ENCODE measurements at regions of chr6 and their contacts with region 1.

Region 1: GRCh38 chr6:31139599-31139998 is 733 bp upstream of the PSORS1C2 start:
- DNase-seq: no peak
- H3K4me3 ChIP-seq: no peak overlapping the region
- H3K27ac ChIP-seq: no peak overlapping the region
- H3K4me1 ChIP-seq: peaks cover 0 to 4% of the 10 kb centered on the region in 2 donors
- H3K27me3 ChIP-seq: no peaks in the 10 kb centered on the region
- CTCF ChIP-seq: no peak

Region 2: DNA sequence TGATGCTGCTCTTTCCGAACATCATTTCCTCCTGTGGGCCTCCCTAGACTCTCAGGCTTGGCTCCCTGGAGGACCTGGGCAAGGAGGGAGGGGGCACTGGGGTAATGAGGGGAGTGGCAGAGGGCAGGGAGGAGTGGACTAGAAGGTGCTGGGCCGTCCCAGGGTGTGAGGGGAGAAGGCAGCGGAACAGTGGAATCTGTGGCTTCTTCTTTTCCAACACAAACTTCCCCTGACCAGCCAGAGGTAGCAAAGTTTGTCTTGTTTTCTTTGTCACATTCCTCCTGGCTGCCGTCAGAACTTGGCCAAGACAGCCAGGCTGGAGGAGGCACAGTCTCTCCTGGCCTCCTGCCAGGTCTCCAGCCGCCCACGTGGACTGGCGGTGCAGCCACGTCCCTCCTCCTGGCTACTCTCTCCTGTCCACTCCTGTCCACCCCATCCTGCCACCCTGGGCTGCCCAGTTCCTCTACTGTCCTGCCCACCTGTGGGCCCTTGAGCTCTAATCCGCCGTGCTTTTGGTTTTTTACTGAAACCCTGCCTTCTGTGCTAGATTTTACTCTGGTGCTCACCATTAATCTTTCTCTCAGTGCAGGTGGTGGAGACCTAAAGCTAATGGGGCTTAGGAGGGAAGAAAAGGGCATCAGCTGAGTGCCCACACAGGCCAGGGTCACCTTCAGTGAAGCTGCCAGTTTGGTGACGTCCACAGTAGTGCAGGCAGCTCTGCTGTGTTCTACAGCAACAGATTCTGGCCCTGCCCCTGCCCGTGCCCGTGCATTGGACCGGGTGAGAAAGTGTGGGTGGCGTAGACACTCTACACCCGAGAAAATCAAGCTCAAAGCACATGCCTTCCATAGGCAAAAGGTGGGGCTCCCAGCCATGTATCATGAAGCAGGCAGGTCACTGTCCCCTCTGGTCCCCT is 16.6 kb before region 1 on chr6:
- intact Hi-C with region 1: no loop called
- DNase-seq: peak in 1 of 2 donors; percentile 78
- H3K4me3 ChIP-seq: no peak overlapping the region
- H3K27ac ChIP-seq: peak overlapping the region; percentile 48 to 56
- H3K4me1 ChIP-seq: peaks cover 0 to 12% of the 10 kb centered on the region in 2 donors
- H3K27me3 ChIP-seq: no peaks in the 10 kb centered on the region
- CTCF ChIP-seq: no peak

Region 3: DNA sequence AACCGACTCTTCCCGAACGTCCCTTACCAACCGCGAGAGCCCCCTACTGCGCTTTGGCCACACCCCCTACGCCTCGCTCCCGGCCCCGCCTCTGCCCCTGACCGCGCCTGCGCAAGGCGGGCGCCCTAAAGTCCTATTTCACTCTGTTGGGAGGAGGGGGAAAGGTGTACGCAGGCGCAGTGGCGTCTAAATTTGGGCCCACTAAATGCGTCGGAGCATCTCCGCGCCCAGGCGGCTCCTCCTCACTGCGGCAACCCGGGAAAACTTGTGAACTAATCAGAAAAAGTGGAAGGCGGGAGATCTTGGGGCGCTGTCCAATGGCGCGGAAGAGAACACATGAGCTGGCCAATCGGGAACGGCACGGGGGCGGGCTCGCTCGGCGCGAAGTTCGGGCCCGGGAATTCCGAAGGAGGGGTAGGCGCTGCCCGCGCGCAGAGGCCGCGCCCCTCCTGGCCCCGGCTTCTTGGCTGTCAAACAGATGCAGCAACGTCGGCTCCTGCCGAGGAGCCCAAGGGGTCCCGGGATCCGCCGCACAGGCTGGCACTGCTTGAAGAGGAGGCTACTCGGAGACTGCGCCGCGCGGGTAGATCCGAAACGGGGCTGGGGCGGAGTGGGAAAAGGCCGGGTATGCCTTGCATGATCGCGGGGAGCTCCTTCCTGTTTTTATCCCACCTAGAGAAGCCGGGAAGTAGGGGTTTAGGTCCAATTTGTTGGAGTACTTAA is 18.7 kb after region 1 on chr6 and contains the start of gene TCF19:
- intact Hi-C with region 1: loop called (anchors 1 kb)
- DNase-seq: peak; percentile 96 to 100
- H3K4me3 ChIP-seq: peak within 1 kb of the TSS; percentile 70 to 86
- H3K27ac ChIP-seq: peak within 1 kb of the TSS; percentile 53 to 70
- H3K4me1 ChIP-seq: peaks cover 0 to 17% of the 10 kb centered on the region in 2 donors
- H3K27me3 ChIP-seq: no peaks in the 10 kb centered on the region
- CTCF ChIP-seq: no peak
- total RNA-seq, gene TCF19: 10.3 TPM

Region 4: DNA sequence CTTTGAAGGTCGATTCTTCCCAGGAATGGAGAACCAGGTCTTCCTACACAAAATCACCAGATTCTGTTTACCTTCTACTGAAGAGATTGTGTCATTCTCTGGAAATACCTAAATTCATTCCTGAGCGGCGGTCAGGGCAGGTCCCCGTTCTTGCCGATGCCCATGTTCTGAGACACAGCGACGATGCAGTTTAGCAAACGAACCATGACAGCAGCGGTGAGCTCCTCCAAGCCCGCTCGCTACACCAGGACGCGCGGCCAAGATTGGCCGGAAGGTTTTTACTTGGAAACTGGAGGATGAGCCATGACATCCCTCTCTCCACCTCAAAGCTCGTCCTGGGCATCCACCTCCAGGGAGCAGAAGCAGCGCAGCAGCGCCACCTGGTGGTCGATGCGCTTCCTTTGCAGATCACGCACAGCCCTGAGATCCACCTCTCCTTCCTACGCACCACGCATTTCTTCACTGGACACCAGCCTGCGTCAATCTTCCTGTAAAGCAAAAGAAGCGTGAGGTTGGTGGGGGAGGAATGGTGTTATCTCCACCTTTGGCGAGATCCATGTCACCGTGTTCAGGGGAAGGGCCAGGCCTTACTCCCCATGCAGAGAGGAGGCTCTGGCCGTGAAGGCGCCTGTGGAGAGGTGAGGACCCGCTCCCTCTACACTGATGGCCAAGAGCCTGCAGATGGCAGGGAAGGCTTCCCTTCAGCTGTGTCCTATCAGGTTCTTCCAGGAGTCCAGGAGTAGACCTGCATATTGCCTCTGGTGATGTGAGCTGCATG is 227.3 kb after region 1 on chr6:
- intact Hi-C with region 1: loop called (anchors 1 kb)
- DNase-seq: peak; percentile 52 to 87
- H3K4me3 ChIP-seq: peak overlapping the region; percentile 46 to 57
- H3K27ac ChIP-seq: no peak overlapping the region
- H3K4me1 ChIP-seq: peaks cover 0 to 3% of the 10 kb centered on the region in 2 donors
- H3K27me3 ChIP-seq: no peaks in the 10 kb centered on the region
- CTCF ChIP-seq: peak; percentile 89 to 93 (median 93)